ENCODE measurements at regions of chr6 and their contacts with region 1.

Region 1: GRCh38 chr6:33585403-33586107 is 5.5 kb upstream of the BAK1 start:
- DNase-seq: peak; percentile 90 to 92 (median 92)
- ATAC-seq: peak; percentile 87
- H3K4me3 ChIP-seq: no peak overlapping the region
- H3K27ac ChIP-seq: no peak overlapping the region
- H3K4me1 ChIP-seq: peaks cover 12 to 19% of the 10 kb centered on the region in 2 experiments
- H3K27me3 ChIP-seq: no peaks in the 10 kb centered on the region
- CTCF ChIP-seq: peak; percentile 94 to 98 (median 94)
- EP300 ChIP-seq: no peak
- POLR2A ChIP-seq: no peak
- RAD21 ChIP-seq: peak; percentile 86 to 95

Region 2: GRCh38 chr6:33632558-33633039 is 47.0 kb after region 1 on chr6:
- CTCF ChIA-PET with region 1: interaction called, 6 read pairs
- POLR2A ChIA-PET with region 1: no interaction called
- in situ Hi-C with region 1: no loop called
- intact Hi-C with region 1: loop called (anchors 1 kb)
- DNase-seq: peak; percentile 76 to 82 (median 79)
- ATAC-seq: peak; percentile 93
- H3K4me3 ChIP-seq: no peak overlapping the region
- H3K27ac ChIP-seq: no peak overlapping the region
- H3K4me1 ChIP-seq: peaks cover 17 to 32% of the 10 kb centered on the region in 2 experiments; a peak in 4 of 5 replicates
- H3K27me3 ChIP-seq: no peaks in the 10 kb centered on the region
- CTCF ChIP-seq: peak; percentile 97 to 99 (median 97)
- EP300 ChIP-seq: no peak
- POLR2A ChIP-seq: no peak
- RAD21 ChIP-seq: peak; percentile 35 to 70; a peak in 3 of 4 replicates

Region 3: GRCh38 chr6:33672808-33673207 is 87.3 kb after region 1 on chr6:
- CTCF ChIA-PET with region 1: interaction called, 14 read pairs
- POLR2A ChIA-PET with region 1: no interaction called
- in situ Hi-C with region 1: no loop called
- intact Hi-C with region 1: loop called (anchors 2 kb)
- DNase-seq: peak; percentile 76 to 83 (median 80)
- ATAC-seq: peak; percentile 86
- H3K4me3 ChIP-seq: no peak overlapping the region
- H3K27ac ChIP-seq: no peak overlapping the region
- H3K4me1 ChIP-seq: peaks cover 0 to 26% of the 10 kb centered on the region in 2 experiments; a peak in 3 of 5 replicates
- H3K27me3 ChIP-seq: no peaks in the 10 kb centered on the region
- CTCF ChIP-seq: peak; percentile 74 to 90 (median 79)
- EP300 ChIP-seq: no peak
- POLR2A ChIP-seq: no peak
- RAD21 ChIP-seq: peak; percentile 49 to 72; a peak in 3 of 4 replicates

Region 4: GRCh38 chr6:33700391-33701050 is 115.0 kb after region 1 on chr6:
- CTCF ChIA-PET with region 1: interaction called, 60 read pairs
- POLR2A ChIA-PET with region 1: no interaction called
- in situ Hi-C with region 1: loop called (anchors 5 kb)
- intact Hi-C with region 1: loop called (anchors 1 kb)
- DNase-seq: peak; percentile 76 to 90 (median 78)
- ATAC-seq: peak; percentile 96
- H3K4me3 ChIP-seq: no peak overlapping the region
- H3K27ac ChIP-seq: no peak overlapping the region
- H3K4me1 ChIP-seq: peaks cover 0 to 5% of the 10 kb centered on the region in 2 experiments; a peak in 1 of 5 replicates
- H3K27me3 ChIP-seq: no peaks in the 10 kb centered on the region
- CTCF ChIP-seq: peak; percentile 91 to 96 (median 94)
- EP300 ChIP-seq: no peak
- POLR2A ChIP-seq: no peak; the same call in 1 of the 2 replicates
- RAD21 ChIP-seq: peak; percentile 65 to 84

Region 5: DNA sequence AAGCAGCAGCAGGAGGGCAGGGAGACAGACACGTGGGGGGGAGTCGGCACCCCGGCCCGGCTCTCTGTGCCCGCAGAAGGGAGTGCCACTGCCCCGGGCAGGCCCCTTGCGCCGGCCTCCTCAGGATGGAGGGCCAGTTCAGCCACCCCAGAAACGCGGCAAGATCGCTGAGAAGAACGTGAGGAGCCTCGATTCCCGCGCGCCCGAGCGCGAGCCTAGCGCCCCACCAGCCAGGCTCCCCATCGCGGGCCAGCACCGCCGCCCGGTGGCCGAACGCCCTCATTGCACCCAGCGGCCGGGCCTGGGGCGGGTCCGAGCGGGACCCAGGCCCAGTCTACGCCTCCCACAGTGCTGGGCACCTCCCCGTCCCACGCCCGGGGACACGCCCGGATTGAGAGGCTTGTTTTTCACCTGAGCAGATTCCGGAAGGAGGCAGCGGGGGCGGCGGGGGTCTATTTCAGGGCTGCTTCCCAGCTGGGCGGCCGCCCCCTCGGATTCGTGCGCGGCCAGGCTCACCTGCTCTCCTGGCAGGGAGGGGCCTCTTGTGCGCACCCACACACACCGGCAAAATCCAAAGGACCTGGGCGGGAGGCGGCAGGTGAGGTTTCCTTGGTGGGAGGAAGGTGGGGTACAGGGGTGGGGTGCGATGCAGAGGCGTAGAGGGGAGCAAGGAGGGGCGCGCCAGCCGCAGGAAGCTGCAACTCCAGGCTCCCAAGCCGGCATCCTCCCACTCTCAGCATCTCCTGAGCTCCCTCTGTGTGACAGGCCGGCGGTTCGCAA is 569.3 kb after region 1 on chr6:
- CTCF ChIA-PET with region 1: no interaction called
- POLR2A ChIA-PET with region 1: no interaction called
- in situ Hi-C with region 1: no loop called
- intact Hi-C with region 1: loop called (anchors 2 kb)
- DNase-seq: peak; percentile 75 to 97 (median 94)
- ATAC-seq: peak; percentile 96
- H3K4me3 ChIP-seq: no peak overlapping the region
- H3K27ac ChIP-seq: no peak overlapping the region
- H3K4me1 ChIP-seq: peaks cover 0 to 14% of the 10 kb centered on the region in 2 experiments; a peak in 2 of 5 replicates
- H3K27me3 ChIP-seq: peaks cover 22 to 68% of the 10 kb centered on the region in 2 experiments; a peak in 4 of 5 replicates
- CTCF ChIP-seq: peak; percentile 97 to 98 (median 98)
- EP300 ChIP-seq: no peak
- POLR2A ChIP-seq: no peak
- RAD21 ChIP-seq: peak; percentile 95 to 98